ENCODE measurements at regions of chr20 and their contacts with region 1.

Region 1: DNA sequence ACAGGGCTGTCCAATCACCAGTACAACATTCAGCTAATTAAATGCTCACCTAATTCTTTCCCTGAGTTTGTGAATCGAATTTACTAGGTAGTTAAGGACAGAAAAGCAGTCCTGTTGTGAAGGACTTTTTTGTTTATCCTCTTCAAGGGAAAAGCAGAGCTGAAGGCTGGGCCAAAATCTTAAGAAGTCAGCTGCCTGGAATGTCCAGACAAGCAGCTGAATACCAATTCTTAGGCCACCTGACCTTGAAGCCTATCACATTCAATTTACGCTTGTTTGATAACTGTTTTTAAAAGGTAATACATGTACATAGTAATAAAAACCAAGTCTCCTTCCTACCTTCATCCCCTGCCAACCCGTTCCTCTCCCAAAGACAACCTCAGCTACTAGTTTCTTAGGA is 56.4 kb downstream of the UQCC1 start:
- DNase-seq: no peak
- H3K4me3 ChIP-seq: no peak overlapping the region
- H3K27ac ChIP-seq: no peak overlapping the region
- H3K4me1 ChIP-seq: no peaks in the 10 kb centered on the region
- H3K27me3 ChIP-seq: no peaks in the 10 kb centered on the region
- CTCF ChIP-seq: no peak
- POLR2A ChIP-seq: no peak

Region 2: DNA sequence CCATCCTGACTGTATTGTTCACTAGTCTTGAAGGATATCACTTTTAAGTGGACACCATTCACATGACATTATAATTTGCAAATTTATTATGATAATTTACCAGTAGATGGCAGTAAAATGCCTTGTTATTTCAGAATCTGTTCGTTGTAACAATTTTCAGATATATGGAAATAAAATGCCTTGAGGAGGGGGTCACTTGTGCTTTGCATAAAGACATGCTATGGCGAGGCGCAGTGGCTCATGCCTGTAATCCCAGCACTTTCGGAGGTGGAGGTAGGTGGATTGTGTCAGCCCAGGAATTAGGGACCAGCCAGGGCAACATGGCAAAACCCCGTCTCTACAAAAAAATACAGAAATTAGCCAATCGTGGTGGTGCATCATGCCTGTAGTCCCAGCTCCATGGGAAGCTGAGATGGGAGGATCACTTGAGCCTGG is 520.9 kb before region 1 on chr20:
- CTCF ChIA-PET with region 1: no interaction called
- POLR2A ChIA-PET with region 1: no interaction called
- dilution Hi-C with region 1: no loop called
- intact Hi-C with region 1: no loop called
- DNase-seq: peak; percentile 50
- H3K4me3 ChIP-seq: no peak overlapping the region
- H3K27ac ChIP-seq: no peak overlapping the region
- H3K4me1 ChIP-seq: peaks cover 2% of the 10 kb centered on the region
- H3K27me3 ChIP-seq: peaks cover 16 to 25% of the 10 kb centered on the region in 2 experiments
- CTCF ChIP-seq: peak in 1 of 2 donors; percentile 18
- POLR2A ChIP-seq: no peak

Region 3: GRCh38 chr20:35368666-35369423 is 13.5 kb after region 1 on chr20:
- CTCF ChIA-PET with region 1: interaction called, 17 read pairs
- POLR2A ChIA-PET with region 1: no interaction called
- dilution Hi-C with region 1: no loop called
- intact Hi-C with region 1: no loop called
- DNase-seq: no peak
- H3K4me3 ChIP-seq: no peak overlapping the region
- H3K27ac ChIP-seq: no peak overlapping the region
- H3K4me1 ChIP-seq: no peaks in the 10 kb centered on the region
- H3K27me3 ChIP-seq: no peaks in the 10 kb centered on the region
- CTCF ChIP-seq: no peak
- POLR2A ChIP-seq: no peak

Measured in endothelial cell of umbilical vein (primary cell).